MCF 10A (cell line): ENCODE measurements at regions of chr16 and their contacts with region 1.

Region 1: DNA sequence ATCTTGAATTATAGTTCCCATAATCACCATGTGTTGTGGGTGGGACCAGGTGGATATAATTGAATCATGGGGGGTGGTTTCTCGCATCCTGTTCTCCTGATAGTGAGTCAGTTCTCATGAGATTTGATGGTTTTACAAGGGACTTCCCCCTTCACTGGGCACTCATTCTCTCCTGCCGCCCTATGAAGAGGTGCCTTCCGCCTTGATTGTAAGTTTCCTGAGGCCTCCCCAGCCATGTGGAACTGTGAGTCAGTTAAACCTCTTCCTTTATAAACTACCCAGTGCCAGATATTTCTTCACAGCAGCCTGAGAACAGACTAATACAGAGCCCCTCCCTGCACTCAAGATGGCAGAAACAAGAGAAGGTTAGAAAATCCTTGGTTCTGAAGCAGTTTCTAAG is 26.4 kb downstream of the LDAF1 start:
- DNase-seq: no peak
- H3K4me3 Mint-ChIP-seq: no peak overlapping the region
- H3K27ac Mint-ChIP-seq: no peak overlapping the region
- H3K4me1 Mint-ChIP-seq: no peaks in the 10 kb centered on the region
- H3K27me3 Mint-ChIP-seq: no peaks in the 10 kb centered on the region
- CTCF ChIP-seq: no peak

Region 2: DNA sequence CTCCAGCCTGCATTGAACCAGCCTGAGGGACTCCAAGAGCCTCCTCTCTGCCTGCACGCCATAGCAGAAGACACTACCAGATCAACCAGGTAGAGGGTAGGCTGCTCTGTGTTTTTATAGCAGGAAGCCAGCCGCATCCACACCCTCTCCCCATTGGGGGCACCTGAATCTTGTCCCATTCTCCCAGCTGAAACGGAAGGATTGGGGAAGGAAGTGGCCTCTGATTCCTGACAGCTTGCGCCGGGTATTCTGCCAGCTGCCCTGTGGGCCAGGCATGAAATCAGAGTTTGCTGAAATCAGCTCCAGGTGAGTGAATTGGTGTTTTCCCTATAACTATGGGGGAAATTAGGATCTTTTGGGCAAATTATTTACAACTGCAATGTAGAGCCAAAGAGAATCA is 26.7 kb after region 1 on chr16 and contains the start of gene ZP2:
- CTCF ChIA-PET with region 1: interaction called, 10 read pairs
- POLR2A ChIA-PET with region 1: no interaction called
- intact Hi-C with region 1: no loop called
- DNase-seq: no peak
- H3K4me3 Mint-ChIP-seq: no peak within 1 kb of the TSS
- H3K27ac Mint-ChIP-seq: no peak within 1 kb of the TSS
- H3K4me1 Mint-ChIP-seq: no peaks in the 10 kb centered on the region
- H3K27me3 Mint-ChIP-seq: no peaks in the 10 kb centered on the region
- CTCF ChIP-seq: no peak
- total RNA-seq, gene ZP2: not detected in 2 replicates

Region 3: DNA sequence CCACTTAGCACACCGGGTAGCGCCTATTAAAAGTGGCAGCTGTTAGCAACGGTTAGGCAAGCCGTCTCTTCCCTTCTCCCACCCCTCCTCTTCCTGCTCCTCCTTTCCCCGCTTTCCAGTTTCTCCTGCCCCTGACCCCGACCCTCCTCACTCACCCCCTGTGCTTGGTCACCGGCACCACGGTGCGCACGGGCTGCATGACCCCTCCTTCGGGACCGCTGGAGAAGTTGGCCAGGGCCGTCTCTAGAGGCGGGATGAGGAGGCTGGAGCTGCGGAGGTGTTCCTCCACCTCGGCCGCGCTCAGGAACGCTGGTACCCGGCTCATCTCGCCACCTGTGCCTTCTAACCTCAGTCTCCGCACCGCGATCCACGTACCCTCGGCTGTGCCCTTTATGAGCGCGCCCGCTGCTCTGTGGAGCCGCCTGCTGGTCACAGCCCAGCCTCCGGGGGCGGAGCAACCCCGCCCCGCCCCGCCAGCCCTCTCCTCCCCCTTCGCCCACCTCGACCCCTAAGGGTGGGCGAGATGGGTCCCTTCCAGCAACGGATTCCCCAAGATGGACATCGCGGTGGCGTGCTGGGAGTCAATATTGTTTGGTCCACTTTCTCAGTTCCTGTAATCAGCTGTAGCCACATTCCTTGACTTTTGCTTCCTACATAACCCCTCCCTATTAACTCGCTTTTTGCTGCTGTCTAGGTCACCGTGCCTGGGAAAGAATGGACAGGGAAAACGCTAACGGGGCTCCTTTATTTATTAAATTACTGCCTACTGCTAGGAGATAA is 93.3 kb after region 1 on chr16 and contains the start of gene CRYM:
- CTCF ChIA-PET with region 1: interaction called, 8 read pairs
- POLR2A ChIA-PET with region 1: interaction called, 3 read pairs
- intact Hi-C with region 1: loop called (anchors 1 kb)
- DNase-seq: no peak
- H3K4me3 Mint-ChIP-seq: peak within 1 kb of the TSS; percentile 67
- H3K27ac Mint-ChIP-seq: no peak within 1 kb of the TSS
- H3K4me1 Mint-ChIP-seq: no peaks in the 10 kb centered on the region
- H3K27me3 Mint-ChIP-seq: peaks cover 63% of the 10 kb centered on the region
- CTCF ChIP-seq: peak; percentile 85
- total RNA-seq, gene CRYM: 1.6 and 4.0 TPM in 2 replicates

Region 4: DNA sequence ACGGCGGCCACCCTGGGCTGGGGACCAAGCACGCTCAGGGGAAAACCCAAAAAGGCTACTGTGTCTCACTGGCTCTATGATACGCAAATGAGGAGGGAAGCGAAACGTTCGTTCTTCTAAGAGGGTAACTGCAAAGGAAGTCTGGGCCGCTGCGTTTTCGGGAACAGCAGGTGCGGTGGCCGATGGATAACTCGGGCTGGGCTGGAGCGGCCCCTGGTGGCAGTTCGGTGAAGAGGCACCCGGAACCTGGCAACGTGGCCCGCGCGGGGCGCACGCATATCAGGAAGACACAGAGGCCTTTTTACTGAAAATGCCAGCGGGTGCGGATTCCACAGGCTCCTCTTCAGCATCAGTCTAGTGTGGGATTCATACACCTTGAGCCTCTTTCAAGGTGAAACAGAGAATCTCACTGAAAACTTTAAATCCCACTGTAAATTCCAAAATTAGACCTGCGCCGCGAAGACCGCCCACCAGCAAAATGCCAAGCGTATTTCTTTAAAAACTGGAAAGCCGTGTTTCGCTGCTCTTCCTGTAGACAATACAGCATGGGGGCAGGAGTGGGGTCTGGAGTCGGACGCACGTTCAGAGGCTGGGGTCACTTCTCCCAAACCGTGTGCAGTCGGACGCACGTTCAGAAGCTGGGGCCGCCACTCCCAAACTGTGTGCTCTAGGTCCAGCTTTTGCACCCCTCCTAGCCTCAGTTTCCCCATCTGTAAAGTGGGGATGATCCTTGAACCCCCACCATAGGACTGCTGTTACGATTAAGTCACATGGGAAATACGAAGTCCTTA is 370.2 kb after region 1 on chr16:
- CTCF ChIA-PET with region 1: interaction called, 4 read pairs
- POLR2A ChIA-PET with region 1: no interaction called
- intact Hi-C with region 1: loop called (anchors 5 kb)
- DNase-seq: peak; percentile 84
- H3K4me3 Mint-ChIP-seq: peak overlapping the region; percentile 40
- H3K27ac Mint-ChIP-seq: no peak overlapping the region
- H3K4me1 Mint-ChIP-seq: peaks cover 8% of the 10 kb centered on the region
- H3K27me3 Mint-ChIP-seq: no peaks in the 10 kb centered on the region
- CTCF ChIP-seq: peak; percentile 100